SK-N-SH (cell line): ENCODE measurements at regions of chr9 and their contacts with region 1.

Region 1: DNA sequence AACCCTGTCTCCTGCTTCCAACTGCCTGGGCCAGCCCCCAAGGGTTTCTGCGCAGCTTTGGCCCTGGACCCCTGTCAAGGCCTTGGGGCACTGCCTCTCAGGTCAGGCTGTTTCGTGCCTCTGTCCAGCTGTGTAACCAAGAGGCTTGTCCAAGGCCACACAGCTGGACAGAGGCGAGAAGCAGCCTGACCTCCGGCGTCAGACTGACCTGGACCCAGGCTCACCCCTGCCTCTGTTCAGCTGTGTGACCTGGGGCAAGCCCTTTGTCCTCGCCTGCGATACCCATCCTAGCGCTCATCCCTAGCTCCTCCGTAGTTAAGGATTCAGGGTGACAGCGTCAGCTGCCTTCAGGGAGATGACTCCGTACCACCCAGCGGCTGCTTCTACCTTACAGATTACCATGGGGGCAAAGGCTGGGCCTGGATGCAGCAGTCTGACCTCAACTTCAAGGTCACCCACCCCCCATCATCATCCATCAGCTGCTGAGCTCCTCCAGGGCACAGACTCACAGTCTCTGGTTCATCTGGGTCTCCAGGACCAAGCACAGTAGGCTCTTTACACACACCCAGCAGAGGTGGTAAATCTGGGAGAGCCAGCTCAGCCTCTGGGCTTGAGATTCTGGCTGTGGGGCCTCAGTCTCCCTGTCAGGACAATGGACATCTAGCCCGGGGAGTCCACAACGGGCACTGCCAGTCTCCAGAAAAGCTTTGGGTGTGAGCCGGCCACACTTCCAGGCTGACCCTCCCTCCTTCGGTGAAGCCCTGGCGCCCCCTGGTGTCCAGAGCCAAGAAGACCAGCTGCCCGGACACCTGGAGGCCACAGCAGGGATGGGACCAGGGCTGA is 7.9 kb downstream of the AK1 start:
- DNase-seq: peak; percentile 97
- H3K4me3 ChIP-seq: peak overlapping the region in 1 of 2 experiments; percentile 46; a peak in 1 of 4 replicates
- H3K27ac ChIP-seq: no peak overlapping the region
- H3K4me1 ChIP-seq: peaks cover 0 to 12% of the 10 kb centered on the region in 2 experiments; a peak in 1 of 4 replicates
- H3K27me3 ChIP-seq: no peaks in the 10 kb centered on the region
- CTCF ChIP-seq: peak; percentile 83
- EP300 ChIP-seq: no peak
- RAD21 ChIP-seq: peak; percentile 95

Region 2: GRCh38 chr9:127770905-127771569 is 98.5 kb before region 1 on chr9:
- CTCF ChIA-PET with region 1: interaction called, 16 read pairs
- POLR2A ChIA-PET with region 1: no interaction called
- DNase-seq: peak; percentile 99
- H3K4me3 ChIP-seq: peak overlapping the region; percentile 46 to 61
- H3K27ac ChIP-seq: no peak overlapping the region
- H3K4me1 ChIP-seq: peaks cover 0 to 17% of the 10 kb centered on the region in 2 experiments; a peak in 1 of 4 replicates
- H3K27me3 ChIP-seq: no peaks in the 10 kb centered on the region
- CTCF ChIP-seq: no peak
- EP300 ChIP-seq: no peak
- RAD21 ChIP-seq: no peak

Region 3: GRCh38 chr9:127796225-127796813 is 73.2 kb before region 1 on chr9:
- CTCF ChIA-PET with region 1: interaction called, 26 read pairs
- POLR2A ChIA-PET with region 1: interaction called, 4 read pairs
- DNase-seq: no peak
- H3K4me3 ChIP-seq: no peak overlapping the region
- H3K27ac ChIP-seq: no peak overlapping the region
- H3K4me1 ChIP-seq: peaks cover 0 to 6% of the 10 kb centered on the region in 2 experiments; a peak in 1 of 4 replicates
- H3K27me3 ChIP-seq: no peaks in the 10 kb centered on the region
- CTCF ChIP-seq: no peak
- EP300 ChIP-seq: no peak
- RAD21 ChIP-seq: no peak

Region 4: GRCh38 chr9:127825319-127826051 is 44.0 kb before region 1 on chr9:
- CTCF ChIA-PET with region 1: interaction called, 11 read pairs
- POLR2A ChIA-PET with region 1: no interaction called
- DNase-seq: peak; percentile 80
- H3K4me3 ChIP-seq: no peak overlapping the region
- H3K27ac ChIP-seq: no peak overlapping the region; a peak in 1 of 4 replicates
- H3K4me1 ChIP-seq: peaks cover 0 to 4% of the 10 kb centered on the region in 2 experiments; a peak in 1 of 4 replicates
- H3K27me3 ChIP-seq: no peaks in the 10 kb centered on the region
- CTCF ChIP-seq: peak; percentile 37; the same call in 1 of the 2 replicates
- EP300 ChIP-seq: no peak
- RAD21 ChIP-seq: no peak

Region 5: DNA sequence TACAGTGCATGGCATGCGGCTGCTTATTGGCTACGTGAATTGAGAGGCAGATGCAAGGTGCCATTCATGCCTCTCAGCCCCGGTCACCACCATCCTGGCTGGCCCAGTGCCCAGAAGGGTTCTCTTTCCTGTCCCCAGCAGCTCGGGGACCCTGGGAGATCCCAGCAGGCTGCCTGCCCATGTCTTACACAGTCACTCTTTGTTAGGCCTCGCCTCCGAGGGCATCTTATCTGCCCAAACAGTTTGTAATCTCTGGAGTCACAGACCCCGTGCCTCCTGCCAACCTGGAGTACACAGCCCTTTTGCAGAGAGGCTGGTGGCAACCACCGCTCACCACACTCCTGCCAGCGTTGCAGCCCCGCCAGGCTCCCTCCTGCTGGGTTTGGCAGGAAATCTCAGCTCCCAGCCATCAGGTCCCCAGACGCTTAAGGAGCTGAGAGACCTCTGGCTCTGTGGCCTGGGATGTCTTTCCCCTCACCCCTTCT is 14.9 kb after region 1 on chr9:
- CTCF ChIA-PET with region 1: interaction called, 24 read pairs
- POLR2A ChIA-PET with region 1: interaction called, 4 read pairs
- DNase-seq: peak; percentile 72
- H3K4me3 ChIP-seq: no peak overlapping the region
- H3K27ac ChIP-seq: peak overlapping the region; percentile 36 to 56; a peak in 3 of 4 replicates
- H3K4me1 ChIP-seq: peaks cover 12 to 15% of the 10 kb centered on the region in 2 experiments; a peak in 2 of 4 replicates
- H3K27me3 ChIP-seq: no peaks in the 10 kb centered on the region
- CTCF ChIP-seq: no peak
- EP300 ChIP-seq: no peak
- RAD21 ChIP-seq: no peak